ENCODE measurements at regions of chr22 and their contacts with region 1.

Region 1: DNA sequence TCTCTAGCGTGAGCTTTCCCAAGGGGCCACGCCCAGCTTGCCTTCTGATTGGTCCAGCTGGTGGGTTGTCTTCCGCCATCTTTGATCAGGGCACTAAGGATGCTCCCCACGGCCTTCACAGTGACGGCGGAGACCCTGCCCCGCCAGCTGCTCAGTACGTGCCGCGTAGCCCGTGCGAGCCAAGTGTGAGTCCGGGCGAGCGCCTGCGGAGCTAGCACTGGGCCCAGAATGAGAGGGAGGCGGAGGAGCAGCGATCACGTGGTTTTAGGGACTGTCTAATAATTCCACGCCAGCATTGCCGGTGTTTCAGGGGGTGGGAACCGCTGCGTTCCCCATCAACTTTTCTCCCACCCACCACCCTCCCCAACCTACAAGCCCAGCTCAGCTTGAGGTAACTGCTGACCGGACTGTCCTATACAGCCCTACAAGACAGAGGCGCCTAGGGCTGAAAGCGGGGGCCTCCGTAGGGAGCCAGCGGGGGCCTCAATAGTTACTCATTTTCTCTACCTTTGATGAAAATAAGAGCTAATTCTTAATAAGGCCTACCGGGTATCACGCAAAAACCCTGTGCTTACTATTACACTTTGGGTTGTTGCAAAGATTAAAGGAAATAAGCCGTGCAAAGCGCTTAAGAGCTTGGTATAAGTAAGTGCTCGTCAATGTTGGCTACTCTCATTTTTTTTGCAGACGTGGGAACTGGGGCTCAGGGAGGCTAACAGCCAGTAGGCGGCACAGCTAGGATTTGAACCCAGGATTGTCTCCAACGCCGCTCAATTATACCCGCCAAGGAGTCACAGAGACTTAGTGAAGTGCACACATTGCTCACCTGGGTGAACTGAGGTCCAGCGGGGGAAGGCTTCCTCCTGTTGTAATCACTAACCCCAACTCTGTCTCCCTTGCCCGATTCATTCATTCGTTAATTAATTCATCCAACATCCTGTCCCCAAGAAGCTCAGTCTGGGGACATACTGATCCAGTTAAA is 1.3 kb upstream of the MTFP1 start:
- DNase-seq: peak; percentile 97 to 99 (median 99)
- H3K4me3 ChIP-seq: peak overlapping the region; percentile 71 to 79
- H3K4me3 Mint-ChIP-seq: peak overlapping the region; percentile 96 to 99 (median 98)
- H3K27ac ChIP-seq: peak overlapping the region; percentile 89
- H3K27ac Mint-ChIP-seq: peak overlapping the region; percentile 88 to 99 (median 99)
- H3K4me1 ChIP-seq: peaks cover 47% of the 10 kb centered on the region
- H3K4me1 Mint-ChIP-seq: peaks cover 35 to 72% (median 49%) of the 10 kb centered on the region in 4 donors
- H3K27me3 ChIP-seq: no peaks in the 10 kb centered on the region
- H3K27me3 Mint-ChIP-seq: no peaks in the 10 kb centered on the region

Region 2: DNA sequence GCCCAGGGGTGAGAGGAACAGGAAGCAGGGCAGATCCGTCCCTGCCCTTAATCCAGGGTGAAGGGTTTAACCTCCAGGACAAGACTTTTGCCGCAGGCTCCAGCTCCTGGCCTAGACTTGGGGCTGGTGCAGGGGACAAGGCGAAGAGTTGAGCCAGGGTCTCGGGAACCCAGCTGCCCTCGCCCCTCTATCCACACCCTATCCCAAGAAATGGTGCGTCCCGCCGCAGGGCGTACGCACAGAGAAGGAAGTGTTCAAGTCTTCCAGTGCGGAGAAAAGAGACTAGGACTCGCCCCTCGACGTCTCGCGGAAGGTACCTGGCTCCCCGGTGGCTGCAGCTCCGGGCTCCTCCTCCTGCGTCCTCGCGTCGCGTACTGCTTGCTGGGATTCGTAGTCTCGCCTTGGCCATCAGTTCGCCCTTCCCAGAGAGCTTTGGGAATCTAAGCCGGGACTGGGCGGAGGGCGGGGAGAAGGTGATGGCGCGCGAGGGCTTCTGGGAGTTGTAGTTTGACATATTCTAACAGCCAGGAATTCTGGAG is 657.6 kb before region 1 on chr22 and contains the start of gene ZMAT5:
- CTCF ChIA-PET with region 1: no interaction called
- POLR2A ChIA-PET with region 1: no interaction called
- intact Hi-C with region 1: loop called (anchors 10 kb)
- DNase-seq: peak; percentile 93 to 96 (median 95)
- H3K4me3 ChIP-seq: peak within 1 kb of the TSS; percentile 96 to 100
- H3K4me3 Mint-ChIP-seq: peak within 1 kb of the TSS; percentile 95 to 100 (median 99)
- H3K27ac ChIP-seq: peak within 1 kb of the TSS; percentile 87
- H3K27ac Mint-ChIP-seq: peak within 1 kb of the TSS; percentile 38 to 99 (median 99)
- H3K4me1 ChIP-seq: peaks cover 29% of the 10 kb centered on the region
- H3K4me1 Mint-ChIP-seq: peaks cover 22 to 53% (median 28%) of the 10 kb centered on the region in 4 donors
- H3K27me3 ChIP-seq: no peaks in the 10 kb centered on the region
- H3K27me3 Mint-ChIP-seq: no peaks in the 10 kb centered on the region
- total RNA-seq, gene ZMAT5: 16.3 to 20.4 TPM

Region 3: DNA sequence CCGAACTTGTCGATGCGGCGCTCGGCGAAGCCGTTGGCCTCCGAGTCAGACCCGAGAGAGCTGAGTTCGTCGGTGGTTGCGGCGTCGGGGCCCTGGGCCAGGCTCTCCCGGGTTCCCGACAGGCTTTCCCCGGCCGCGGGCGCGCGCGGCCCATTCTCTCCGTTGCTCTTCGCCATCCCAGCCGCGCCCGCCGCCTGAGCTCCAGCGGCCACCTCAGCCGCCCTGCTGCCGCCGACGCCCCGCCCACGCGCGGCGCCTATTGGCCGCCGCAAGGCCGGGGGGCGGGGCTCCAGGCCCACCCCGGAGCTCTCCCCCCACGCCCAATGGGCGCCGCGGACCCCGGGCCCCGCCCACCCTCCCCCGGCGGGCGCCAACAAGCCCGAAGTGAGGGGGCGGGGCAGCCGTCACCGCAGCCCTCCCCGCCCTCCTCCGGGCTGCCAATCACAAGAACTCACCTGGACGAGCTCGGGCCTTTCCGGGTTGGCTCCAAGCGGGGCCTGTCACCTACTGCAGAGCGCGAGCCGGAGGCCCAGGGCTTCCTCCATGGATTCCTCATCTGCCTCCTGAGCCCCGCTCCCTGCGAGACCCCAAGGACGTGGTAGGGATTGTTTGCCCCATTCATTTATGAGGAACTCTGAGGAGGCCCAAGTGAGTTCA is 97.4 kb before region 1 on chr22 and contains the start of gene TBC1D10A:
- CTCF ChIA-PET with region 1: interaction called, 4 read pairs
- POLR2A ChIA-PET with region 1: interaction called, 22 read pairs
- intact Hi-C with region 1: loop called (anchors 1 kb)
- DNase-seq: peak; percentile 92 to 94 (median 93)
- H3K4me3 ChIP-seq: peak within 1 kb of the TSS; percentile 76 to 78
- H3K4me3 Mint-ChIP-seq: peak within 1 kb of the TSS; percentile 90 to 95 (median 93)
- H3K27ac ChIP-seq: peak within 1 kb of the TSS; percentile 83
- H3K27ac Mint-ChIP-seq: peak within 1 kb of the TSS; percentile 90 to 97 (median 93)
- H3K4me1 ChIP-seq: peaks cover 50% of the 10 kb centered on the region
- H3K4me1 Mint-ChIP-seq: peaks cover 37 to 54% (median 45%) of the 10 kb centered on the region in 4 donors
- H3K27me3 ChIP-seq: no peaks in the 10 kb centered on the region
- H3K27me3 Mint-ChIP-seq: no peaks in the 10 kb centered on the region
- total RNA-seq, gene TBC1D10A: 62.2 to 76.8 TPM

Region 4: GRCh38 chr22:30340911-30341685 is 83.2 kb before region 1 on chr22:
- CTCF ChIA-PET with region 1: no interaction called
- POLR2A ChIA-PET with region 1: no interaction called
- intact Hi-C with region 1: no loop called
- DNase-seq: no peak
- H3K4me3 ChIP-seq: no peak overlapping the region
- H3K4me3 Mint-ChIP-seq: no peak overlapping the region
- H3K27ac ChIP-seq: no peak overlapping the region
- H3K27ac Mint-ChIP-seq: no peak overlapping the region
- H3K4me1 ChIP-seq: peaks cover 22% of the 10 kb centered on the region
- H3K4me1 Mint-ChIP-seq: peaks cover 12 to 18% (median 16%) of the 10 kb centered on the region in 4 donors
- H3K27me3 ChIP-seq: no peaks in the 10 kb centered on the region
- H3K27me3 Mint-ChIP-seq: no peaks in the 10 kb centered on the region

Region 5: DNA sequence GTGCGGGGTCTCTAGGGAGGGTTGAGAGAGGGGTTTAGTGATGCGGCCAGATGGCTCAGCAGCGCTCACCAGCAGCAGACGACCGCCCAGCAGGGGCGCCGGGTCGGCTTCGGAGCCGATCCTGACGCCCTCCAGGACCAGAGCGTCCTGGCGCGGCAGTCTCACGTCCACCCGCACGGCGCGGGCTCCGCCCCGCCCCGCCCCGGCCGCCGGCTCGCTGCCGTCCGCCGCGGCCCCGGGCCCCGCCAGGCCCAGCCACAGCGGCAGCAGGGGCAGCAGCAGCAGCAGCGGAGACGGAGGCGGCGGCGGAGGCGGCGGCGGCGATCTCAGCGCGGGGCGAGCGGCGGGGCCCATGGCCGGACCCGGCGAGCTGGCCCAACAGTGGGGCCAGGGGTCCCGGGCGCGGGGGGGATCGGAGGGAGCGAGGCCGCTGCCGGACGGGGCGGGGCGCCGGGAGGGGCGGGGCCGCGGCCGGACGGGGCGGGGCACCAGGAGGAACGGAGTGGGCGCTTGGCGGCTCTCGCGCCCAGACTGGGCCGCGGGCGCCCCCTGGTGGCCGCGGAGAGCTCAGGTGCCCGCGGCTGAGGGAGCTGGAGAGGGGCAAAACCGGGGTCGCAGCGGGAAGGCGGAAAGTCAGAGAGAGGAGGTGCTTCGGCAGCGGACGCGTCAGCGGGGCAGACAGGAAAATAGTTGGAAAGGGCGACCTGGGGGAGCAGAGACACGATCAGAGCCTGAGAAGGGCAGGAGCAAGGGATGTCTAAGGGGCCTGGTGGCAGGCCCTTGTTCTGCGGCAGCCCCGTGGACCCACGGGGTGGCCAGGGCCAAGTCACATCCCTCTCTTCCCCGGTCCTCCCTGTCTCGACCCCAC is 37.1 kb before region 1 on chr22 and contains the start of gene RNF215:
- CTCF ChIA-PET with region 1: interaction called, 194 read pairs
- POLR2A ChIA-PET with region 1: interaction called, 41 read pairs
- intact Hi-C with region 1: loop called (anchors 1 kb)
- DNase-seq: peak; percentile 66 to 85 (median 79)
- H3K4me3 ChIP-seq: no peak within 1 kb of the TSS
- H3K4me3 Mint-ChIP-seq: peak within 1 kb of the TSS; percentile 63 to 84 (median 79)
- H3K27ac ChIP-seq: no peak within 1 kb of the TSS
- H3K27ac Mint-ChIP-seq: peak within 1 kb of the TSS in 5 of 7 donors; percentile 0 to 94 (median 84)
- H3K4me1 ChIP-seq: peaks cover 13% of the 10 kb centered on the region
- H3K4me1 Mint-ChIP-seq: peaks cover 9 to 15% (median 11%) of the 10 kb centered on the region in 4 donors
- H3K27me3 ChIP-seq: no peaks in the 10 kb centered on the region
- H3K27me3 Mint-ChIP-seq: peaks cover 0 to 2% of the 10 kb centered on the region in 2 donors
- total RNA-seq, gene RNF215: 6.1 to 6.6 TPM

Region 6: DNA sequence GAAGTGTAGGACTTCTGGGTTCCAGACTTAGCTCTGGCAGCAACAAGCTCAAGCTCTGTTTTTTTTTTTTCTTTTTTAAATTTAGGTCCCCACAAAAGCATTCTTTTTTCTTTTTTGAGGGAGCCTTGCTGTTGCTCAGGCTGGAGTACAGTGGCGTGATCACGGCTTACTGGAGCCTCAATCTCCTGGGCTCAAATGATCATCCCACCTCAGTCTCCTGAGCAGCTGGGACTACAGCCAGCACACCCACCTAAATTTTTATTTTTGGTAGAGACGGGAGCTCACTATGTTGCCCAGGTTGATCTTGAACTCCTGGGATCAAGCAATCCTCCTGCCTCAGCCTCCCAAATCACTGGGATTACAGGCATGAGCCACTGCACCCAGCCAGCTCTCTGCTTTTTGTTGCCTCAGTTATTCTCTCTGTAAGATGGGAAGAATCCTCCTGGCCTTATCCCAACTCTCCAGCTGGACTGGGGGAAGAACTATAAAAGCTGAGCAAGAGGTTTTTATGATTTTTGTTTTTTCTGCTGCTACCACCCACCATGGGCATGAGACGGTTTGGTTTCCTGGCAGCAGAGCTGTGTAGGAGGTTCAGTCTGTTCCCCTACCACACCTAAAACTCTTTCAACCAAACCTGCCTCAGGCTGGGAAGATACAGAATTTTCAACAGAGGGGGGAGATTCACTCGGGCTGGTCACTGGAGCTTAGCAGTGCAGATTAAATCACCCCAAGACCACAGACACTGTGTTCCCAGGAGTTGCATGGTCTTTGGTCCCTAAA is 10.3 kb before region 1 on chr22:
- CTCF ChIA-PET with region 1: interaction called, 34 read pairs
- POLR2A ChIA-PET with region 1: interaction called, 55 read pairs
- intact Hi-C with region 1: no loop called
- DNase-seq: no peak
- H3K4me3 ChIP-seq: no peak overlapping the region
- H3K4me3 Mint-ChIP-seq: peak overlapping the region in 1 of 8 donors; percentile 55
- H3K27ac ChIP-seq: no peak overlapping the region
- H3K27ac Mint-ChIP-seq: peak overlapping the region; percentile 44 to 94 (median 59)
- H3K4me1 ChIP-seq: peaks cover 7% of the 10 kb centered on the region
- H3K4me1 Mint-ChIP-seq: peaks cover 9 to 20% (median 14%) of the 10 kb centered on the region in 4 donors
- H3K27me3 ChIP-seq: no peaks in the 10 kb centered on the region
- H3K27me3 Mint-ChIP-seq: no peaks in the 10 kb centered on the region

Region 7: DNA sequence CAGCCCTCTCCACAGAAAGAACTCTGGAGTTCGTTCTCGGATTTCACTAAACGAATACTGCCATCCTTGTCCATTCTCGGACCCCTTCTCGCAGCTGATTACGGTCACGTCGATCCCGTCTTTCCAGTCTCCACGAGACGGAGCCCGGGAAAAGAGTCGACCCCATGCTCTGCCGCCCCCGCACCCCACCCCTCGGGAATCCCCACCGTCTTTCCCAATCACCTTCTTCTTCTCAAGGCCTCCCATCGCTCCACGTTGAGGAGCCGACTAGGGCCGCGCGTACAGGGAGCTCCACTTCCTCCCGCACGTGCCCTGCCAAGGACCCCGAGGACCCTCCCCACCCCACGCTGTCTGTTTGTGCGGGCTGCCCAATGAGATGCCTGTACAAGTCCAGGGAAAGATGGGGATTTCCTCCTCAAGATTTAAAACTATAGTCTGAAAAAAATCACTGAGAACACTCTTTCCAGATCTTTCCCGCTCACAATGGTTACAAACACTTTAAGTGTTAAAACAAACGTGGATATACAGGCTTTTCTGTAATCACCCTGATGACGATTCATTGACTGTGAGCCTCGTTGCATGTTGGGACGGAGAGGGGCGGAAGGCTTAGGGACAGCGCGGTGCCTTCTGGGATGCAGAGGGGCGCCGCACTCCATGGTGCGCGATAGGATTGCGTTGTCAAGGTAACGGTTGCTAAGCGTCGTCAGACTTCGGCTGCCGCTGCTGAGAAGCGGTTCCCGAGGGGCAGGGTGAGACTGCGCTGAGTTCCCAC is 167.5 kb after region 1 on chr22 and contains the start of gene PES1:
- CTCF ChIA-PET with region 1: no interaction called
- POLR2A ChIA-PET with region 1: interaction called, 9 read pairs
- intact Hi-C with region 1: loop called (anchors 1 kb)
- DNase-seq: peak; percentile 96 to 98 (median 97)
- H3K4me3 ChIP-seq: peak within 1 kb of the TSS; percentile 50 to 99
- H3K4me3 Mint-ChIP-seq: no peak within 1 kb of the TSS
- H3K27ac ChIP-seq: peak within 1 kb of the TSS; percentile 78
- H3K27ac Mint-ChIP-seq: peak within 1 kb of the TSS in 1 of 7 donors; percentile 82
- H3K4me1 ChIP-seq: peaks cover 22% of the 10 kb centered on the region
- H3K4me1 Mint-ChIP-seq: peaks cover 0 to 10% (median 3%) of the 10 kb centered on the region in 4 donors
- H3K27me3 ChIP-seq: no peaks in the 10 kb centered on the region
- H3K27me3 Mint-ChIP-seq: peaks cover 3 to 7% of the 10 kb centered on the region in 2 donors
- total RNA-seq, gene PES1: 50.1 to 51.6 TPM